ENCODE measurements at regions of chr14 and their contacts with region 1.

Region 1: DNA sequence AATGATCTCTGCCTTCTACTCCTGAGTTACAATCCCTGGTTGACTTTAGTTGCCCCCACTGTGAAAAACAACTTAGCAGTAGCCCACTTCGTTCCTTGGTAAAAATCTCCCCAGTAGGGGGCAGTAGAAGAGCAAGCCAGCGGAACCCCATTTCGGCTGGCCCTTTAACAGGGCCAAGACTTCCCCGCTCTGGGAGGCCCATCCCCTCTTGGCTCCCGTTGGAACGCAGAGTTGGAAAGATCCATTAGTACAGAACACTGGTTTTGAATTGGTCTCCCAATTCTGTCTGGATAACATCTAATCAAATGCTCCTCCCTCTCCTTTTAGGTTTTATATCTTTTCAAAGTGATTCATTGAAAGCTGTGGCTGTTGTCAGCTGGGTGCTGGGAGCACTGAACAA is 1133.3 kb downstream of the BCL11B start:
- DNase-seq: peak; percentile 76
- ATAC-seq: peak; percentile 43
- H3K4me3 Mint-ChIP-seq: peak overlapping the region; percentile 65
- H3K27ac Mint-ChIP-seq: peak overlapping the region; percentile 98
- H3K4me1 Mint-ChIP-seq: peaks cover 87% of the 10 kb centered on the region
- H3K27me3 Mint-ChIP-seq: no peaks in the 10 kb centered on the region

Region 2: DNA sequence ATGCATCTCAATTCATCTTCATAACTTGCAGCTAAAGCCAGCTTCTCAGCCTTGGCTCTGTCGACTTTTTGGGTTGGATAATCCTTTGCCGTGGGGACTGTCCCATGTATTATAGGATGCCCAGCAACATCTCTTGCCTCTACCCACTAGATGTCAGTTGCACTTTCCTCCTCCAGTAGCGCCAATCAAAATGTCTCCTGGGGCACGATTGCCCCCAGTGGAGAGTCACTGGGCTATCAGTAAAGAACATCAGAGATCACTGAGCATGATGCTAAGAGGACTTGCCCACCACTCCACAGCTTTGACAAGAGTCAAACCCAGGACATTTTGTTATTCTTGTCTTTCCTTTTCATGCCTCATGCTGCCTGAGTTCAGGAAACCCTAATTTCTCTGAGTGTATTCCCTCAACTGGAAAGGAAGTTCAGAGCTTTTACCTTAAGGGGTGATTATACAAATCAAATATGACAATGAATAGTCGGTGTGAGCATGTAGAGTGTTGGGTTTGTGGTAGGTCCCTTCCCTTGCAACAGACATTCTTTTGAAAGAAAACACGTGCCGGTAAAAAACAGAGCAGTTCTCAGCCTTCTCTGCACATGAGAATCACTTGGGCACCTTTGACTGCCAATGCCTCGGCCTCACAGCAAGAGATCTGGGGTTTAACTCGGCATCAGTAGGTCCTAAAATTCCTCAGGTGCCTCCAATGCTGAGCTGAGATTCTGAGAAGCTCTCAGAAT is 360.9 kb before region 1 on chr14:
- CTCF ChIA-PET with region 1: no interaction called
- POLR2A ChIA-PET with region 1: no interaction called
- intact Hi-C with region 1: no loop called
- DNase-seq: peak; percentile 37
- ATAC-seq: peak; percentile 79
- H3K4me3 Mint-ChIP-seq: no peak overlapping the region
- H3K27ac Mint-ChIP-seq: no peak overlapping the region
- H3K4me1 Mint-ChIP-seq: peaks cover 22% of the 10 kb centered on the region
- H3K27me3 Mint-ChIP-seq: no peaks in the 10 kb centered on the region

Region 3: GRCh38 chr14:97994020-97994531 is 144.6 kb before region 1 on chr14:
- CTCF ChIA-PET with region 1: no interaction called
- POLR2A ChIA-PET with region 1: interaction called, 6 read pairs
- intact Hi-C with region 1: loop called in 1 of 2 experiments (anchors 5 kb)
- DNase-seq: peak; percentile 52
- ATAC-seq: peak; percentile 81
- H3K4me3 Mint-ChIP-seq: peak overlapping the region; percentile 18
- H3K27ac Mint-ChIP-seq: peak overlapping the region; percentile 94
- H3K4me1 Mint-ChIP-seq: peaks cover 71% of the 10 kb centered on the region
- H3K27me3 Mint-ChIP-seq: no peaks in the 10 kb centered on the region

Region 4: DNA sequence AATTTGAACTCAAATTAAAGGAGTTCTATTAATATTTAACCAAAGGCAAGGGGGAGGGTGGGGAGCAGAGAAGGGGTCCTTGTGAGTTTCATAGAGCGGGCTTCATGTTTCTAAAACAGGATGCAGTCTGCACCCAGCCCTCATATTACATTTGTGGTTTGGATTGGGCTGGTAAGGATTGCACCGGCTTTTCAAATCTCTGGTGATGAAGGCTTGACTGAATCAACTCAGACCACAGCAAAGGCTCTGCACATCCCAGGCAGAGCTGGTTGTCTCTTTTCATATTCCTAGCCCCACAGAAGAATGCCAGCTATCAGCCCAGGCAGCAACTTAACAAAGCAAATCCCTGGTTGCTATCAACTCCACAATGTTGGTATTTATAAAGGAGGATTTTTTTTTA is 120.0 kb before region 1 on chr14:
- CTCF ChIA-PET with region 1: no interaction called
- POLR2A ChIA-PET with region 1: no interaction called
- intact Hi-C with region 1: no loop called
- DNase-seq: peak; percentile 47
- ATAC-seq: peak; percentile 89
- H3K4me3 Mint-ChIP-seq: no peak overlapping the region
- H3K27ac Mint-ChIP-seq: no peak overlapping the region
- H3K4me1 Mint-ChIP-seq: peaks cover 71% of the 10 kb centered on the region
- H3K27me3 Mint-ChIP-seq: no peaks in the 10 kb centered on the region

Region 5: DNA sequence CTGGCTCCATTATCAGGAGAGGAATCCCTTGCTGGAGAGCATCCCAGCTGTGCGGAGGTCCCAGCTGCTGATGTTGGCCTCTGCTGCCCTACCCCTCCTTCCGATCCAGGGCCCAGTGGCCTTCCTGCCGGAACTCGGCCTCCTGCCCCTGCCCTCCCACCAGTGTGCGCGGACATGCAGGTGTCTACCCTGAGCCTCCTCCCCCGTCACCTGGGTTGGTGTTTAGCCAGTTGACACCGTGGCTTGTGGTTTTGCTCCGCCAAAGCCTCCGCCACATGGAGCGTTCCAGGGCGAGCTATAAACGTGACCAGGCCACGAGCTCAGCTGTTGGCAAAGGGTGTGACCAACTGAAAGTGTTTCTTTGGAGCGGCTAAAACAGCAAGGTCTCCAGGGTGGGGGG is 29.0 kb after region 1 on chr14:
- CTCF ChIA-PET with region 1: interaction called, 15 read pairs
- POLR2A ChIA-PET with region 1: interaction called, 13 read pairs
- intact Hi-C with region 1: loop called (anchors 2 kb)
- DNase-seq: peak; percentile 50
- ATAC-seq: no peak
- H3K4me3 Mint-ChIP-seq: peak overlapping the region; percentile 31
- H3K27ac Mint-ChIP-seq: peak overlapping the region; percentile 99
- H3K4me1 Mint-ChIP-seq: peaks cover 92% of the 10 kb centered on the region
- H3K27me3 Mint-ChIP-seq: no peaks in the 10 kb centered on the region

Region 6: DNA sequence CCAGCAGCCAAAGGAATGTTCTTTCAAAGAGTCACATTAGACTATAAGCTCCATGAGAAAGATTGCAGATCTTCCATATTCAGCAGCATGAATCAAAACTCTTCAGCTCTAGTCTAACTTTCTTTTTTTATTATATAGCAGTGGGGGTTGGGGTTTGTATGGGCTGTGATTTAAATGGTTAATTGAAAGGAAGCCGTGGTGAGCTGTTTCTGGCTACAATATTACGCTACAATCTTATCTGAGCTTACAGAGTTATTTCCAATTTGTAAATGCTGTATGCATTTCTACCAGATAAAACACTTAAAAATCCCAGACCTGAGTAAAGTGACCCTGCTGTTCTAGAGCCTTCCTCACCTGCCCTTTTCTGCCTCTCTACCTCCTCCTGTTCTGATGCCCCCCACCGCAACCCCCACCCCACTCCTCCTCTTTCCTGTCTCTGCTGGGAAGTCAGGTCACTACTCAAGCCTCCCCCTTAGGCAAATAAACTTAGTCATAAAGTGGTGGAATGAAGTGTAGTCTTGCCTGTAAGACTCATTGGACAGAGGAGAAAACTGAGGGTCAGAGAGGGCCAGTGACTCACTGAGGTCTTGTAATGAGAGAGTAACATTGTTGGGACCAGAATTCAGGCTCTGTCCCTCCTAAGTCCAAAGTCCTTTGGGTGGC is 43.9 kb after region 1 on chr14:
- CTCF ChIA-PET with region 1: interaction called, 21 read pairs
- POLR2A ChIA-PET with region 1: interaction called, 6 read pairs
- intact Hi-C with region 1: loop called in 1 of 2 experiments (anchors 2 kb)
- DNase-seq: peak; percentile 86
- ATAC-seq: peak; percentile 74
- H3K4me3 Mint-ChIP-seq: peak overlapping the region; percentile 35
- H3K27ac Mint-ChIP-seq: peak overlapping the region; percentile 100
- H3K4me1 Mint-ChIP-seq: peaks cover 96% of the 10 kb centered on the region
- H3K27me3 Mint-ChIP-seq: no peaks in the 10 kb centered on the region

Region 7: DNA sequence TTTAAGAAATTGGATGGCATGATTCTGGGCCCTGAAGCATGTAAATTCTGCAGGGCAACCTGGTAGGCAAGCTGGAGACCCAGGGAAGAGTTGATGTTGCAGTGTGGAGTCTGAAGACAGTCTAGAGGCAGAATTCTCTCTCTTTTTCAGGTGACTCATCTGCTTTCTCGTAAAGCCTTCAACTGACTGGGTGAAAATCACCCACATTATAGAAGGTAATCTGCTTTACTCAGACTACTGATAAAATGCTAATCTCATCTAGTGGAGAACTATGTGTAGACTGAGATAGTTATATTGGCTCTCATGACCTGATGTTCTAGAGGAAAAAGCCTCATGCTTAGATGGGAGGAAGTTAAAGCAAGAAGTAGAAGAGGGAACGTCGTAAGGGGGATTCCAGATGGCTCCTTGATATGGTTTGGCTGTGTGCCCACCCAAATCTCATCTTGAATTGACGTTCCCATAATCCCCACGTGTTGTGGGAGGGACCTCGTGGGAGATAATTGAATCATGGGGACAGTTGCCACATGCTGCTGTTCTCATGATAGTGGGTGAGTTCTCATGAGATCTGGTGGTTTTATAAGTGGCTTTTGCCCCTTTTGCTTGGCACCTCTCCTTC is 409.5 kb after region 1 on chr14:
- CTCF ChIA-PET with region 1: no interaction called
- POLR2A ChIA-PET with region 1: no interaction called
- intact Hi-C with region 1: loop called in 1 of 2 experiments (anchors 1 kb)
- DNase-seq: peak; percentile 61
- ATAC-seq: peak; percentile 94
- H3K4me3 Mint-ChIP-seq: peak overlapping the region; percentile 16
- H3K27ac Mint-ChIP-seq: peak overlapping the region; percentile 93
- H3K4me1 Mint-ChIP-seq: peaks cover 22% of the 10 kb centered on the region
- H3K27me3 Mint-ChIP-seq: no peaks in the 10 kb centered on the region

Region 8: GRCh38 chr14:98871796-98872195 is 733.1 kb after region 1 on chr14:
- CTCF ChIA-PET with region 1: no interaction called
- POLR2A ChIA-PET with region 1: no interaction called
- intact Hi-C with region 1: no loop called
- DNase-seq: no peak
- ATAC-seq: no peak
- H3K4me3 Mint-ChIP-seq: no peak overlapping the region
- H3K27ac Mint-ChIP-seq: no peak overlapping the region
- H3K4me1 Mint-ChIP-seq: peaks cover 4% of the 10 kb centered on the region
- H3K27me3 Mint-ChIP-seq: no peaks in the 10 kb centered on the region

Measured in activated CD4-positive, alpha-beta T cell treated with anti-CD3 and anti-CD28 coated beads for 36 hours (primary cell).